ENCODE measurements at regions of chr2 and their contacts with region 1.

Region 1: DNA sequence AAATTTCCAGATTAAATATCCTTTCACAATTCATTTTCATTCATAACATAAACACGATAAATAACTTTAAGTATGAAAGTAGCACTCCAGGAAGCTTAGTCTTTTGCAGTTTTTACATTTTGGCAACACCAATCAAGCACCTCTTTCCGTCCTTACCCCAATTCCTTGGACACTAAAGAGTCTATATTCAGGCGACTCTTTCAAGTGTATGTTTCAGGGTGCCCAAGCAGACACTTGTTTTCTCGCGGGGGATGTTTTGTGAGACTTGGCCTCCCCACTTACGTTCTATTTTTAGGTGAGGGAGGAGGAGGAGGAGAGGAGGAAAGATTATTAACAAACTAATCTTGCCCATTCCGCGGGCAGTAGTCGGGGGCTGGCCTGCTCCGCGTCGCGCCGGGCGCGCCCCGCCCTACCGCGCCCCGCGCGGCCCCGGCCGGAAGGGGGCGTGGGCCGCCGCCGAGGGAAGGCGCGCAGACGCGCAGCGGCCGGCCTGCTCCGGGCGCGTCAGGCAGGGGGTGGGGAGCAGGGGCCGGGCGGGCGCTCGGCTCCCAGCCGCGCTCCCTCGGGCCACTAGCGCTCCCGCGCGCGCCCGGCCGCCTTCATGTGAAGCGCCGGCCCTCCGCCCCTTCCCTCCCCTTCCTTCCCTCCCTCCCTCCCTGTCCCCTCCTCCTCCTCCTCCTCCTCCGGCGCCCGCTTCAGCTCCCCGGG is at the start of gene ITPRID2:
- DNase-seq: peak; percentile 96
- ATAC-seq: peak; percentile 98
- total RNA-seq, gene ITPRID2: 64.5 TPM

Region 2: DNA sequence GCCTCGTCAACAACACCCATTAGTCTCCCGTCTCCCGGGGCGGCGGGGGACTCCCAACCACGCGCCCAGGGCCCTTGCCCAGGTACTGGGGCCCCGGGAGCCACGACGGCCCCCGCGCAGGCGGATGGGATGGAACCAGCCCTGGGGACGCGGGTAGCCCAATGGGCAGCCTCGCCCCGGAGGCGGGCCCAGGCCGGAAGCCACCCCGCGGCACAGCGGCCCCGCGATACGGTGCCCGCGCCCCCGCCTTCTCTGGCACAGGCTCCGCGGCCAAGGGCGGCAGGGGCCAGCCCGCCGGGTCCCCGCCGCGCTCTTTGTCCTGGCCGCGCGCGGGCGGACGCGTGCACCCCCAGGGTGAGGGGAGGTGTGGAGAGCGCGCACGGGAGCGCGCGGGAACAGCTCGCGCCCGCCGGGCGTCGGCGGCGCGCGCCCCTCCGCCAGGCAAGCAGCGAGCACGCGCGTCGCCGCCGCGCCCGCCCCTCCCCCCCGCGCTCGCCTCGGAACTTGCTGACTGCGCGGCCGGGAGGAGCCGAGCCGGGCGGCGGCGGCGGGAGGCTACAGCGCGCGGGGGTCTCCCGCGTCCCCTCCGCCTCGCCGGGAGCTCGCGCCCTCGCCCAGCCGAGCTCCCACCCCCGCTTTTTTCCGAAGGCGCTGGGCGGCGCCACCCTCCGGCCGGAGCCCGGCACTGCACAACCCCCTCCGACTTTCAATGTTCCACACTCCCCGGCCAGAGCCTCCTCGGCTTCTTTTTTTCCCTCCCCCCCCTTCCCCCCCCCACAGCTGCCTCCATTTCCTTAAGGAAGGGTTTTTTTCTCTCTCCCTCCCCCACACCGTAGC is 911.1 kb before region 1 on chr2 and contains the start of gene UBE2E3:
- intact Hi-C with region 1: loop called (anchors 10 kb)
- DNase-seq: peak; percentile 86
- ATAC-seq: peak; percentile 95
- total RNA-seq, gene UBE2E3: 48.4 TPM

Region 3: GRCh38 chr2:181810823-181811695 is 80.4 kb before region 1 on chr2:
- intact Hi-C with region 1: loop called (anchors 5 kb)
- DNase-seq: no peak
- ATAC-seq: peak; percentile 20

Region 4: DNA sequence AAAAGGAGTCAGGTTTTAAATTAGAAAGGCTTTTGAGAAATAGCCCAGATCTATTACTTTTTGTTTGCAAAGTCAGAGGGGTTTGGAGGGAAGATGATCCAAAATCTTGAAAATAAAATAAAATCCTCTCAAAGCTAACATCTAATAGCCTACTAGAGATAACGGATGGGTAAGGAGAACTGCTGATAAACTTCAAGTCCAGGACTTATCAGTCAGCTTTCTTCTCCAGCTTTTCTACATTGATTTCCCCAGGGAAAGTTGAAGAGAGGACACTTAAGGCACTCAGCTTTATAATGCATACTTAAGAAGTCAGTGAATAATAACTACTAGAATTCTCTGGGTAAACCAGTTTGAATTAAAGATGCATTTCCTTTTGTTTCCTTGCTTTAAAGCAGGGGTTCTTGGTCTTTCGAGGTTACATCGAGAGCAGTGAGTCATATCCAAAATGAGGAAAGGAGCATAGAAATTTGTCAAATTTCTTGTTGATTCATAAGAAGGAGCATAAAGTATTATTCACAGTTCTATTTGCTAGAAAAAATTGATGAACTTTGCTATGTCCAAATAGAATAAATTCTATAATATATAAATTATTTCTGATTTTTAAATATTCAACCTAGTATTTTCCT is 43.0 kb before region 1 on chr2:
- intact Hi-C with region 1: loop called (anchors 5 kb)
- DNase-seq: no peak
- ATAC-seq: no peak

Region 5: GRCh38 chr2:181984814-181985631 is 93.6 kb after region 1 on chr2:
- intact Hi-C with region 1: loop called (anchors 5 kb)
- DNase-seq: no peak
- ATAC-seq: peak; percentile 61

Region 6: GRCh38 chr2:182031956-182032355 is 140.5 kb after region 1 on chr2:
- intact Hi-C with region 1: no loop called
- DNase-seq: no peak
- ATAC-seq: no peak

Region 7: GRCh38 chr2:182049372-182050148 is 158.1 kb after region 1 on chr2:
- intact Hi-C with region 1: no loop called
- DNase-seq: no peak
- ATAC-seq: peak; percentile 82

Region 8: GRCh38 chr2:182077451-182078142 is 186.2 kb after region 1 on chr2:
- intact Hi-C with region 1: loop called (anchors 10 kb)
- DNase-seq: peak; percentile 66
- ATAC-seq: peak; percentile 96

Region 9: GRCh38 chr2:182207049-182207746 is 315.8 kb after region 1 on chr2:
- intact Hi-C with region 1: no loop called
- DNase-seq: no peak
- ATAC-seq: no peak

Region 10: GRCh38 chr2:182740701-182741100 is 849.3 kb after region 1 on chr2:
- intact Hi-C with region 1: no loop called
- DNase-seq: no peak
- ATAC-seq: no peak